Natural killer cell (primary cell): ENCODE measurements at regions of chr5 and their contacts with region 1.

Region 1: DNA sequence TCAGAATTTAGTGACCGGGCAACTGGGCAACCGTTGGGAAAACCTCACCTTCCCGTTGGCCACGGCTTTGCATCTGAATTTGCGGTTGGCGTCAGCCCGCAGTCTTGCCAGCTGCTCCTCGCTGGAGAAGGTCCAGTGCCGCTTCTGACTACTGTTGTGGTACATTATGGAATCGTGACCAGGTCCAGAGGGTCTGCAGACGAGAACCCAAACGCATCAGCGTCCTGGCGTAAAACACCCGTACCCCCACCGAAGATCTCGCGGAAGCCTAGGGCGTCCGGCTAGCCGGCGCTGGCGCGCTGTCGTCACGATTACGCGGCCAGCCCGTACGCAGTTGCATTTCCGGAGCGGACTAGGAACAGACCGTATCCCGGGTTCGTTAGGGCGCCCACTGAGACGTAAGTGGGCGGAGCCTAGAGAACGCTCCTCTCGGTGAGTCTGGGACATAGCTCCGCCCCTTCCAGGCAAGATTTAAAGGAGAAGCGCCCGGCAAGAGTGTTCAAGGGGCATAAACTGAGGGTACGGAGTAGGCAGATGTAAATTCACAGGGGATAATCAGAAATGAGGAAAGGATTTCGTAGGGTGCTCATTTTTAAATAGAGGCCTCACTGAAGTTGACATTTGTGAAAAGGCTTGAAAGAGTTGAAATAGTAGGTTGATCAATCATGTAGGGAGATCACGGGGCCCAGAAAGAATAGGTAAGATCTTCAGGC is at the start of gene CCNH:
- DNase-seq: peak; percentile 91 to 99
- ATAC-seq: peak; percentile 93 to 99 (median 96)
- H3K4me3 ChIP-seq: peak within 1 kb of the TSS; percentile 94
- H3K4me3 Mint-ChIP-seq: peak within 1 kb of the TSS; percentile 97
- H3K27ac ChIP-seq: peak within 1 kb of the TSS; percentile 97
- H3K27ac Mint-ChIP-seq: peak within 1 kb of the TSS; percentile 90 to 99
- H3K4me1 ChIP-seq: peaks cover 6% of the 10 kb centered on the region
- H3K4me1 Mint-ChIP-seq: peaks cover 40 to 44% of the 10 kb centered on the region in 2 donors
- H3K27me3 ChIP-seq: no peaks in the 10 kb centered on the region
- H3K27me3 Mint-ChIP-seq: peaks cover 10 to 25% of the 10 kb centered on the region in 2 donors
- CTCF ChIP-seq: no peak
- total RNA-seq, gene CCNH: 171 to 305 (median 268) TPM

Region 2: GRCh38 chr5:86617756-86618576 is 794.8 kb before region 1 on chr5 and contains the start of gene COX7C:
- intact Hi-C with region 1: loop called (anchors 1 kb)
- DNase-seq: peak; percentile 81 to 99
- ATAC-seq: peak; percentile 97 to 98 (median 98)
- H3K4me3 ChIP-seq: peak within 1 kb of the TSS; percentile 89
- H3K4me3 Mint-ChIP-seq: peak within 1 kb of the TSS; percentile 98
- H3K27ac ChIP-seq: peak within 1 kb of the TSS; percentile 88
- H3K27ac Mint-ChIP-seq: peak within 1 kb of the TSS; percentile 93 to 98
- H3K4me1 ChIP-seq: peaks cover 5% of the 10 kb centered on the region
- H3K4me1 Mint-ChIP-seq: peaks cover 23 to 30% of the 10 kb centered on the region in 2 donors
- H3K27me3 ChIP-seq: peaks cover 3% of the 10 kb centered on the region
- H3K27me3 Mint-ChIP-seq: peaks cover 0 to 9% of the 10 kb centered on the region in 2 donors
- CTCF ChIP-seq: no peak
- total RNA-seq, gene COX7C: 237 to 264 (median 250) TPM

Region 3: GRCh38 chr5:86797677-86798076 is 615.1 kb before region 1 on chr5:
- intact Hi-C with region 1: no loop called
- DNase-seq: no peak
- ATAC-seq: no peak
- H3K4me3 ChIP-seq: no peak overlapping the region
- H3K4me3 Mint-ChIP-seq: no peak overlapping the region
- H3K27ac ChIP-seq: no peak overlapping the region
- H3K27ac Mint-ChIP-seq: no peak overlapping the region
- H3K4me1 ChIP-seq: no peaks in the 10 kb centered on the region
- H3K4me1 Mint-ChIP-seq: no peaks in the 10 kb centered on the region
- H3K27me3 ChIP-seq: no peaks in the 10 kb centered on the region
- H3K27me3 Mint-ChIP-seq: peaks cover 0 to 2% of the 10 kb centered on the region in 2 donors
- CTCF ChIP-seq: no peak